Activated naive CD4-positive, alpha-beta T cell treated with anti-CD3 and anti-CD28 coated beads for 36 hours (primary cell): ENCODE measurements at regions of chr9 and their contacts with region 1.

Region 1: GRCh38 chr9:91727316-91727861 is 222.6 kb downstream of the ROR2 start:
- DNase-seq: peak; percentile 49
- H3K4me3 Mint-ChIP-seq: no peak overlapping the region
- H3K27ac Mint-ChIP-seq: no peak overlapping the region
- H3K4me1 Mint-ChIP-seq: no peaks in the 10 kb centered on the region
- H3K27me3 Mint-ChIP-seq: peaks cover 2% of the 10 kb centered on the region

Region 2: GRCh38 chr9:91681461-91682305 is 45.7 kb before region 1 on chr9:
- CTCF ChIA-PET with region 1: no interaction called
- intact Hi-C with region 1: loop called (anchors 5 kb)
- DNase-seq: peak; percentile 82
- H3K4me3 Mint-ChIP-seq: no peak overlapping the region
- H3K27ac Mint-ChIP-seq: no peak overlapping the region
- H3K4me1 Mint-ChIP-seq: peaks cover 4% of the 10 kb centered on the region
- H3K27me3 Mint-ChIP-seq: peaks cover 32% of the 10 kb centered on the region

Region 3: GRCh38 chr9:91740701-91741100 is 13.3 kb after region 1 on chr9:
- CTCF ChIA-PET with region 1: no interaction called
- intact Hi-C with region 1: no loop called
- DNase-seq: no peak
- H3K4me3 Mint-ChIP-seq: no peak overlapping the region
- H3K27ac Mint-ChIP-seq: no peak overlapping the region
- H3K4me1 Mint-ChIP-seq: no peaks in the 10 kb centered on the region
- H3K27me3 Mint-ChIP-seq: no peaks in the 10 kb centered on the region

Region 4: DNA sequence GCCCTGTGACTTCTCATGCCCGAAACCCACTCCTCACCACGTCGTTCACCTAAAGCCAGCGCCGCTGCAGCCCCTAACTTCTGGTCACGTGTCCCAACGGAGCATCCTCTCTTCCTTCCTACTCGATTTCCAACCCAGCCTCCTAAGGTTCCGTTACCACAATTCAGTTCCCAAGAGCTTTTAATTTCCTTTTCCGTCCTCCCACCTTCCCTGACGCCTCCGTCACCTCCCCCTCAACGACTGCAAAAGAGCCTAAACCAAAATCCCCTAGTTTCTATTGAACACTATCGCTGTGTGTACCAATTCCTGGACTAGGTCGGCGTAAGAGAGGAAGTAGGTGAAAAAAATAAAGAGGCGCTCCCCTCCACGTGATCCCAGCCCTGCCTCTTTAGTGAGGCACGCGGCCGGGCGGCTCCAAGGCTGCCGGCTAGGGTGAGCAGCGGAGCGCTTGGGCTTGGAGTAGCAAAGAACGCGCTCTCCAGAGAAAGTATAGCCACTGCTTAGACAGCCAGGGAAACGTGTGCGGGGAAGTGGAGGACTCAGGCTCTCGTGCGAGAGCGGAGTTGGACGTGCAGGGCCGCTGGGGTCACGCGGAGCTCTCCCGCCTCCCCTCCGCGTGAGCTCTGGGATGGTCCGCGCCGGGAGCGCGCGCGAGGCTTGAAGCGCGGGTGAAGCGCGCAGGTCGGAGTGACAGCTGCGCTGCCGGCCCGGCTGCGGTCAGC is 598.0 kb after region 1 on chr9 and contains the starts of genes CENPP and NOL8:
- CTCF ChIA-PET with region 1: no interaction called
- intact Hi-C with region 1: no loop called
- DNase-seq: peak; percentile 88
- H3K4me3 Mint-ChIP-seq: peak within 1 kb of the TSS; percentile 99
- H3K27ac Mint-ChIP-seq: peak within 1 kb of the TSS; percentile 97
- H3K4me1 Mint-ChIP-seq: peaks cover 41% of the 10 kb centered on the region
- H3K27me3 Mint-ChIP-seq: no peaks in the 10 kb centered on the region
- total RNA-seq, gene CENPP: 24.9 to 26.5 TPM
- total RNA-seq, gene NOL8: 41.0 to 46.2 TPM